ENCODE measurements at regions of chr4 and their contacts with region 1.

Region 1: DNA sequence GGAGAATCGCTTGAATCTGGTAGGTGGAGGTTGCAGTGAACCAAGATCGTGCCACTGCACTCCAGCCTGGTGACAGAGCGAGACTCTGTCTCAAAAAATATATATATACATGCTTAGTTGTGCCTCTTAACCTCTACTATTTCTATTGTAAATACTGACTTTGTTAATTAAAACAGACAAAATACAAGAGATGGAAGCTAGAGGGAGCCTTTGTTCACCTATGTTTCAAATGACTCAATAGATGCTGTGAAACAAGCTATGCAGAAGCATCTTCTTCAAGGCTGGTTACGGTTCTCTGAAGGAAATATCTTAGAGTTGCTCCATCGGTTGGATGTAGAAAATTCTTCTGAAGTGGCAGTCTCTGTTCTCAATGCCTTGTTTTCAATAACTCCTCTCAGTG is 6.2 kb downstream of the NCAPG start:
- DNase-seq: no peak
- H3K4me3 Mint-ChIP-seq: no peak overlapping the region
- H3K27ac Mint-ChIP-seq: no peak overlapping the region
- H3K4me1 Mint-ChIP-seq: peaks cover 5% of the 10 kb centered on the region
- H3K27me3 Mint-ChIP-seq: no peaks in the 10 kb centered on the region
- CTCF ChIP-seq: no peak

Region 2: GRCh38 chr4:17597517-17597916 is 219.5 kb before region 1 on chr4:
- CTCF ChIA-PET with region 1: no interaction called
- intact Hi-C with region 1: no loop called
- DNase-seq: peak; percentile 28
- H3K4me3 Mint-ChIP-seq: no peak overlapping the region
- H3K27ac Mint-ChIP-seq: no peak overlapping the region
- H3K4me1 Mint-ChIP-seq: no peaks in the 10 kb centered on the region
- H3K27me3 Mint-ChIP-seq: no peaks in the 10 kb centered on the region
- CTCF ChIP-seq: no peak

Region 3: DNA sequence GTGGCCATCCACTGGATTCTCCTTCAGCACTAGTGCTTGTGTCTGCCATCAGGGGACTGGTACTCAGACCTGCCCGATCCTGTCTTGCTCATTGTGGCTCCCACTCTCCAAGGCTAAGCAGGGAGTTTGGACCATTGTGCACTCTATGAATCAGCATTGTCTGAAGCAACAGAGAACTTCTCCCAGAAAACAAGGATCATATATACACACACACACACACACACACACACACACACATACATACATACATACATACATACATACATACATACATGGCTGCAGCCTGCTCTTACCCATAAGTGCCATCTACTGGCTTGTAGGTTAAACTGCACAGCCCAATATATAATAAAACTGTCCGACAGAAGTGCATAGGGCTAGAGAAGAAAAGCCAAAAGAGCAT is 549.9 kb after region 1 on chr4:
- CTCF ChIA-PET with region 1: no interaction called
- intact Hi-C with region 1: loop called (anchors 1 kb)
- DNase-seq: no peak
- H3K4me3 Mint-ChIP-seq: no peak overlapping the region
- H3K27ac Mint-ChIP-seq: no peak overlapping the region
- H3K4me1 Mint-ChIP-seq: no peaks in the 10 kb centered on the region
- H3K27me3 Mint-ChIP-seq: no peaks in the 10 kb centered on the region
- CTCF ChIP-seq: no peak

Region 4: GRCh38 chr4:18593445-18594002 is 776.5 kb after region 1 on chr4:
- CTCF ChIA-PET with region 1: no interaction called
- intact Hi-C with region 1: loop called (anchors 1 kb)
- DNase-seq: peak; percentile 45
- H3K4me3 Mint-ChIP-seq: peak overlapping the region; percentile 55
- H3K27ac Mint-ChIP-seq: no peak overlapping the region
- H3K4me1 Mint-ChIP-seq: no peaks in the 10 kb centered on the region
- H3K27me3 Mint-ChIP-seq: peaks cover 9% of the 10 kb centered on the region
- CTCF ChIP-seq: peak; percentile 37

Measured in Calu3 (cell line).